ENCODE measurements at regions of chr12 and their contacts with region 1.

Region 1: GRCh38 chr12:92136965-92137721 is 8.5 kb downstream of the BTG1 start:
- DNase-seq: no peak
- H3K4me3 Mint-ChIP-seq: peak overlapping the region; percentile 99
- H3K27ac Mint-ChIP-seq: peak overlapping the region; percentile 98
- H3K4me1 Mint-ChIP-seq: peaks cover 71% of the 10 kb centered on the region
- H3K27me3 Mint-ChIP-seq: no peaks in the 10 kb centered on the region

Region 2: DNA sequence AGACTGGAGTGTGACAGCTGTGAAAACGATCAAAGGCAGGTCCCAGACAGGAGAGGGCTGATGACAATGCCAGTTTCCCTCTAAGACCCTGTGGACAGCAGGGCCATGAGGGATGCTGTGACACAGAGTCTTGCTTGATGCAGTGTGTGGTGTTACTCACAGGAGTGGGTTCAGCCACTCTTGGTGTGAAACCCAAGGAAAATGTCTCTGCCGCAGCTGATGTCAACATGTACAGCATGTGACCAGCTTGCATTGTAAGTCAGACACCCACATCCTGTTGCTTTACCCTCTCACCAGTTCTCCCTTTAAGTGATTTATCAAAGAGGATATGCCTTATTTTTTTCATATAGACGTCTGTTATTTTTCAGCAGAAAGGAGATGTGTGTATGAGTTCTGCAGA is 260.1 kb before region 1 on chr12:
- CTCF ChIA-PET with region 1: no interaction called
- POLR2A ChIA-PET with region 1: interaction called, 95 read pairs
- DNase-seq: peak; percentile 89
- H3K4me3 Mint-ChIP-seq: peak overlapping the region; percentile 37
- H3K27ac Mint-ChIP-seq: peak overlapping the region; percentile 91
- H3K4me1 Mint-ChIP-seq: peaks cover 47% of the 10 kb centered on the region
- H3K27me3 Mint-ChIP-seq: no peaks in the 10 kb centered on the region

Region 3: DNA sequence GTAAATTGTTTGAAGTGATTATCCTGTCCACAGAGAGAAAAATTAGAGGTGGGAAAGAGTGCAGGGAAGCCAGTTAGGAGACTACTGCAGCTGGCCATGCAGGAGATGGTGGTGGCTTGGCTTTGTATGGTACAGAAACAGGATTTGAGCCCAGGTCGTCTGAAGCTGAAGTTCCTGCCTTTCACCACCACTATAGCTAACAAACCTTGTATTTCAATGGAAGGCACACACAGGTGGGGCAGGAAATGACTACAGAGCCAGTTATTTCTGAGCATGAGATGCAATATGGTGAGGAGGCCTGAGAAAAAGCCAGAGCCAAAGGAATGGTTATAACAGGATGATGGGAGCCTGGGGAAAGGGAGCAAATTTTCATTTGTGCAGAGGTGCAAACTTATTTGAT is 95.4 kb before region 1 on chr12:
- CTCF ChIA-PET with region 1: interaction called, 3 read pairs
- POLR2A ChIA-PET with region 1: interaction called, 15 read pairs
- DNase-seq: peak; percentile 31
- H3K4me3 Mint-ChIP-seq: no peak overlapping the region
- H3K27ac Mint-ChIP-seq: peak overlapping the region; percentile 67
- H3K4me1 Mint-ChIP-seq: peaks cover 45% of the 10 kb centered on the region
- H3K27me3 Mint-ChIP-seq: no peaks in the 10 kb centered on the region

Region 4: GRCh38 chr12:92055864-92056263 is 81.3 kb before region 1 on chr12:
- CTCF ChIA-PET with region 1: interaction called, 3 read pairs
- POLR2A ChIA-PET with region 1: interaction called, 10 read pairs
- DNase-seq: peak; percentile 74
- H3K4me3 Mint-ChIP-seq: peak overlapping the region; percentile 45
- H3K27ac Mint-ChIP-seq: peak overlapping the region; percentile 89
- H3K4me1 Mint-ChIP-seq: peaks cover 64% of the 10 kb centered on the region
- H3K27me3 Mint-ChIP-seq: no peaks in the 10 kb centered on the region

Region 5: DNA sequence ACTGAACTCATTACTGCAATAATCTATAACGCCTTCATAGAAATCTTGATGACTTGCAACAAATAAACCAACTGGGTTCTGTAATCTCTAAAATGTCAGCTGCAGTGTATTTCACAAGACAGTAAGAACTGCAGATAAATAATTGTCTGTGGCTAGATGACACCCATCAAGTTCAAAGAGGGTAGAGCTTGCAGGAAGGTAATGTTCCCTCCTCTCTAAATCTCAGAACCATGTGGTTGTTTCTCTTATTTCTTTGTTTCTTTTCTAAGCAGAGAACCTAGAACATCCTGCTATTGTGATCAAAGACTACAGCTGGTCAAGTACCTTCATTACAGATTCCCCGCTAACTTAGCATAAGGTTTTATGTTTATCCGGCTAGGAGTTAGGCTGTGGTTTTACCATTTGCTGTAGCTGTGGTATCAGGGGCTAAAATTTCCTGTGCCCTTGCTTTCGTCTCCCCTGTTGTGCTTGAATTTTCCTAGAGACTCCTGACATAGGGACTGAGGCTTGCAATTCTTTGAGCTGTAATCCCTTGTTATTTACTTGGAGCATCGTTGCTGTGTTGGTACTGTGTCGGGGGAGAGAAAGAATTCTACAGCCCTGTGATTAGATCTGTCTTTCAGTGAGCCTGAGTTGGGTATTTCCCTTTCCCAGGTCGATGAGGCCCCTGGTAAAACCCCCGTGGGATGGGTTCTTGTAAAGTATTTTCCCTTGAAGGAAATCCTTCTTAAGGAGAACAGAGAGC is 261.6 kb after region 1 on chr12:
- CTCF ChIA-PET with region 1: no interaction called
- POLR2A ChIA-PET with region 1: interaction called, 327 read pairs
- DNase-seq: no peak
- H3K4me3 Mint-ChIP-seq: peak overlapping the region; percentile 18
- H3K27ac Mint-ChIP-seq: peak overlapping the region; percentile 77
- H3K4me1 Mint-ChIP-seq: peaks cover 84% of the 10 kb centered on the region
- H3K27me3 Mint-ChIP-seq: no peaks in the 10 kb centered on the region